ENCODE measurements at regions of chr5 and their contacts with region 1.

Region 1: GRCh38 chr5:132007399-132008165 is 3.9 kb downstream of the ACSL6 start:
- DNase-seq: peak in 9 of 10 donors; percentile 59 to 94 (median 83)

Region 2: DNA sequence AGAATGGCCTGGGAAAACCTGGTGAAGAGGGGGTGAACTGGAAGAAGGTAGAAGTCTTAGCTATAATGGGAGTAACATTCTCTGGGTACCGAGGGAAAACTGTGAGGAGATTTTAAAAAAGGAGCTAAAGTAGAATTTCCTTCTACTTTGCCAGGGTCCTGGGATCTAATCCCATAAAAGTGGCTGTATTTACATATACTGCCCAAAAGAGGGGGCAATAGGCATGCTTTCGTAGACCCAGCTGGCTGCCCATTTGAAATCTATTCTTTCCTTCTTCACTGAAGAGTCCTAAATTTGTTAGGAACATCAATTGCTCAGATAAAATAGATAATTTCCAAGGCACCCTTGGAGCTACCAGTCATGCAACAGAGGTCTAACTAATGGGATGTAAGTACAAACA is 584.5 kb before region 1 on chr5:
- intact Hi-C with region 1: loop called (anchors 5 kb)
- DNase-seq: no peak

Region 3: DNA sequence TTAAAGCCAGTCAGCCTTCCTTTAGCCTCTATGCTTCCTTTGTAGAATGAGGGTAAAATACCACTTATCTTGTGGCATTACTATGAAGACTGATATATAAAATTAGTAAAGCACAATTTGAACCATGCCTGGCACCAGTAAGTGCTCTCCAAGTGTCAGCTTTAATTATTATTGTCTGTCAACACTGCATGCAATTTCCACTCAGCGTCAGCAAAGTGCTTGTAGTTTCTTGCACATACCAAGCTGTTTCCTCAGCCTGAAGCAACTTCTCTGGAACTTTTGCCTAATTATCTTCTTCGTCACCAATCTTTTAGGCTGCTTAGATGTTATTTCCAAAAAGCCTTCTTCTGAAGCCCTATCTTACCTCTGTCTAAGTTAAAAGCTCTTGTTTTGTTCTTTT is 566.4 kb before region 1 on chr5:
- intact Hi-C with region 1: loop called (anchors 5 kb)
- DNase-seq: no peak

Region 4: DNA sequence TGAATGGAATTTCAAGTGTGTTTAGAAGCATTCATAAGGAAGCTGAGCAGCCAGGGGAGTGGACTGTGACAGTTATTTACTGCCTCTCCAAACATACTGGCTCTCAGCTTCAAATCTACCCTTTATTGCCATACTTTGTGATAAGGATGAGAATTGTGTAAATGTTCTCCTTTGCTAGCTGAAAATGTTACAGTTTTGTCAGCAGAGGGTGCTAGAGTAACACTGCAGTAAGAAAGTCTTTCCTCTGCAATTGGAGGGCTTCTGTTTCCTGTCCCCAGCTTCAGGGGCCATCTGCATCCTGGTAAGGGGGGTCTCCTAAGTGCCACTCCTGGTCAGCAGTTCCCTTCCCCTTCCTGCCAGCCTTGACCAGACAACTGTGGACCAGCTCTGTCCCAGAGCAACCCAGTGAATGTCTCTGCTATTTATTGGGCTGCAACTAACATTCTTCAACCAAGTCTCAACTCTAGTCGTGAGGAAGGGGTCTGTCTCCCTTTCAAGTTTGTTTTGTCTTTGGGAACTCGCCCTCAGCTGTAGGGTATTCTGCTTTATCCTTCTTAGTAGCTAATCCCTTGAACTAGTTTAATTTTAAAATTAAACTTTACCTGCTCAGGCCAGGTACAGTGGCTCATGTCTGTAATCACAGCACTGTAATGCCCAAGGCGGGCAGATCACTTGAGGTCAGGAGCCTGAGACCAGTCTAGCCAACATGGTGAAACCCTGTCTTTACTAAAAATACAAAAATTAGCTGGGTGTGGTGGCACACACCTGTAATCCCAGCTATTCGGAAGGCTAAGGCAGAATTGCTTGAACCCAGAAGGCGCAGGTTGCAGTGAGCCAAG is 417.9 kb before region 1 on chr5:
- intact Hi-C with region 1: loop called (anchors 1 kb)
- DNase-seq: peak in 4 of 10 donors; percentile 4 to 77 (median 30)

Region 5: GRCh38 chr5:131634996-131635754 is 372.4 kb before region 1 on chr5 and contains the start of gene RAPGEF6:
- intact Hi-C with region 1: loop called (anchors 10 kb)
- DNase-seq: peak; percentile 92 to 99 (median 96)

Region 6: GRCh38 chr5:131796793-131797693 is 210.5 kb before region 1 on chr5 and contains the start of gene FNIP1:
- intact Hi-C with region 1: loop called (anchors 5 kb)
- DNase-seq: peak; percentile 99 to 100 (median 100)

Region 7: GRCh38 chr5:131810510-131811249 is 196.9 kb before region 1 on chr5:
- intact Hi-C with region 1: loop called (anchors 1 kb)
- DNase-seq: no peak